Caco-2 (cell line): ENCODE measurements at regions of chr10 and their contacts with region 1.

Region 1: GRCh38 chr10:9209105-9209798 is 1154.8 kb downstream of the GATA3 start:
- DNase-seq: peak; percentile 63 to 77
- H3K4me3 ChIP-seq: no peak overlapping the region
- H3K4me3 Mint-ChIP-seq: no peak overlapping the region
- H3K27ac Mint-ChIP-seq: no peak overlapping the region
- H3K4me1 ChIP-seq: no peaks in the 10 kb centered on the region
- H3K4me1 Mint-ChIP-seq: peaks cover 6% of the 10 kb centered on the region
- H3K27me3 ChIP-seq: no peaks in the 10 kb centered on the region; the same call in 1 of the 2 replicates
- H3K27me3 Mint-ChIP-seq: peaks cover 3% of the 10 kb centered on the region
- CTCF ChIP-seq: peak; percentile 89 to 96

Region 2: DNA sequence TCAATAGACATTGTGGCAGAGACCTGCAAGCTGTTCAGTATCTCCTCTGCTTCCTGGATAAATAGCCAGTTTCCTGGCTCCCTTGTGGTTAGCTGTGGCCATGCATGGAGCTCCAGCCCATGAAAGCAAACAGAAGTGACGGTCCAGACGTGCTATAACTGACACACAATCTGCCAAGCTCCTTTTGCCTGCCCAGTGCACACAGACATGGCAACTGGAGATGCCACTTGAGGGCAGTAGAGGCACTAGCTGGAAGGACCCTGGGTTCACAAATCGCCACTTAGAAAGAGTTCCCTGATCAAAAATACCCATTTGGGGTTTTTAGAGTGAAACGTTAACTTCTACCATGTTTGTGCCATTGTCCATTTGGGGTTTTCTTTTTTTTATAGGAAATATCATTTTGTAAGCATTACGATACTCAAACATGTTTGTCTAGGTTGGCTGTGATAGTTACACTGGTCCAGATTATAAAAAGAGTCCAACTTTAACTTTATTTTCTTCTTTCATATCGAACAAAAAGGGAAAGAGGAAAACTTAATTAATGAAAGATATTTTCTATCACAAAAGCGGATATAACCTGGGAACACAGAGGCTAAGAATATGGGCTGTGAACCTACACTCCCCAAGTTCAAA is 1452.8 kb before region 1 on chr10:
- CTCF ChIA-PET with region 1: no interaction called
- POLR2A ChIA-PET with region 1: no interaction called
- intact Hi-C with region 1: loop called (anchors 5 kb)
- DNase-seq: peak in 1 of 2 experiments; percentile 56
- H3K4me3 ChIP-seq: no peak overlapping the region
- H3K4me3 Mint-ChIP-seq: no peak overlapping the region
- H3K27ac Mint-ChIP-seq: no peak overlapping the region
- H3K4me1 ChIP-seq: no peaks in the 10 kb centered on the region
- H3K4me1 Mint-ChIP-seq: no peaks in the 10 kb centered on the region
- H3K27me3 ChIP-seq: no peaks in the 10 kb centered on the region
- H3K27me3 Mint-ChIP-seq: no peaks in the 10 kb centered on the region
- CTCF ChIP-seq: peak; percentile 50 to 84

Region 3: GRCh38 chr10:7818295-7819122 is 1390.7 kb before region 1 on chr10 and contains the start of gene TAF3:
- CTCF ChIA-PET with region 1: no interaction called
- POLR2A ChIA-PET with region 1: no interaction called
- intact Hi-C with region 1: loop called (anchors 1 kb)
- DNase-seq: peak; percentile 94 to 99
- H3K4me3 ChIP-seq: peak within 1 kb of the TSS; percentile 95
- H3K4me3 Mint-ChIP-seq: peak within 1 kb of the TSS; percentile 84
- H3K27ac Mint-ChIP-seq: peak within 1 kb of the TSS; percentile 72
- H3K4me1 ChIP-seq: peaks cover 4% of the 10 kb centered on the region; the same call in 1 of the 2 replicates
- H3K4me1 Mint-ChIP-seq: peaks cover 8% of the 10 kb centered on the region
- H3K27me3 ChIP-seq: no peaks in the 10 kb centered on the region
- H3K27me3 Mint-ChIP-seq: no peaks in the 10 kb centered on the region
- CTCF ChIP-seq: no peak
- total RNA-seq, gene TAF3: 28.9 and 30.6 TPM in 2 replicates

Region 4: DNA sequence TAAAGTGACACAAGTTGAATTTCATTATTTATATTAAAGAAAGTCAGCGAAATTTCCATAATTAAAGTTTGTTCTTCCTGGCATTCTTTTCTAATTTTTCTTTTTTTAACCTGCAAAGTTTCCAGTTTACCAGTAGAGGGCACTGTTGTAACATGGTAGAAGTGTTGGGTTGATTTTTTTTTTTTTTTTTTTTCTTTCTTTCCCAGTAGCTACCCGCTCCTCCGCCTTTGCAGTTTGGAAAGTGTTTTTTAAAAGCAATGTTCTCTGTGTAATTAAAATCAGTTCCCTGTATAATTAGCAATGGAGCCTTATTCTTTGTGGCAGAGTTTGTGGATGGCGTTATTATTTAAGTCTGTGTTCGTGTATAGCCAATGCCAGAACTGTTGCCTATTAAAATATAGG is 1337.2 kb before region 1 on chr10:
- CTCF ChIA-PET with region 1: no interaction called
- POLR2A ChIA-PET with region 1: no interaction called
- intact Hi-C with region 1: loop called (anchors 5 kb)
- DNase-seq: peak in 1 of 2 experiments; percentile 21
- H3K4me3 ChIP-seq: peak overlapping the region; percentile 25
- H3K4me3 Mint-ChIP-seq: peak overlapping the region; percentile 66
- H3K27ac Mint-ChIP-seq: no peak overlapping the region
- H3K4me1 ChIP-seq: peaks cover 26% of the 10 kb centered on the region
- H3K4me1 Mint-ChIP-seq: peaks cover 11% of the 10 kb centered on the region
- H3K27me3 ChIP-seq: no peaks in the 10 kb centered on the region
- H3K27me3 Mint-ChIP-seq: no peaks in the 10 kb centered on the region
- CTCF ChIP-seq: peak; percentile 83

Region 5: DNA sequence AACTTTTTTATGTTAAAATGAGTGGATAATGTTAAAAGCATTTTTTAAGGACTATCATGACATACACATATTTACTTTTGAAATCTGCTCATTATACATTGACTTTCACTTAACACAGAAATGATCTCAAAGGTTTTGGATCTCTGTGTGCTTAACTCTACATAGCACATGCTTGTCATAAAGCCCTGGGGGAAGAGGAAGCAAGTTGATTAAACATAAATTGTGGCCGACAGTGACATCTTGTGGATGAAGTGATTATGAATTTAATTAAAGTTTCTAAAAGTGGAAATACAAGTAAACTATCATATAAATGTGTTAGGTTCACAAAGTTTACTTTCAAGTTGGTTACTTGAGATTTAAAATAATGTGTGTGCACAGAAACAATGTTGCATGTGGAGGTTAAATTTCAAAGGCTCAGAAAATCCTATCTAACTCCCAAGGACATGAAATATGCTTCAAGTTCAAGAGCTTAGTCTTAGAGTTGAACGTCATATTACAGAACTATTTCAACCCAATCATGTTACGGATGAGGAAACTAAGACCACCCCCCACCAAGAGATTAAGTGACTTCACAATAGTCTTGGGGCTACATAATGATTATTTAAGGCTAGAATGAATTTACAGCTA is 93.0 kb after region 1 on chr10:
- CTCF ChIA-PET with region 1: no interaction called
- POLR2A ChIA-PET with region 1: no interaction called
- intact Hi-C with region 1: loop called (anchors 1 kb)
- DNase-seq: peak in 1 of 2 experiments; percentile 53
- H3K4me3 ChIP-seq: no peak overlapping the region
- H3K4me3 Mint-ChIP-seq: no peak overlapping the region
- H3K27ac Mint-ChIP-seq: no peak overlapping the region
- H3K4me1 ChIP-seq: no peaks in the 10 kb centered on the region
- H3K4me1 Mint-ChIP-seq: no peaks in the 10 kb centered on the region
- H3K27me3 ChIP-seq: no peaks in the 10 kb centered on the region
- H3K27me3 Mint-ChIP-seq: peaks cover 7% of the 10 kb centered on the region
- CTCF ChIP-seq: peak; percentile 40 to 48